Mammary epithelial cell (primary cell): ENCODE measurements at regions of chr9 and their contacts with region 1.

Region 1: GRCh38 chr9:119968836-119969707 is 599.8 kb upstream of the BRINP1 start:
- DNase-seq: peak; percentile 45
- H3K4me3 ChIP-seq: no peak overlapping the region
- H3K27ac ChIP-seq: no peak overlapping the region
- H3K4me1 ChIP-seq: peaks cover 4% of the 10 kb centered on the region
- H3K27me3 ChIP-seq: peaks cover 2% of the 10 kb centered on the region
- CTCF ChIP-seq: peak; percentile 96 to 97

Region 2: DNA sequence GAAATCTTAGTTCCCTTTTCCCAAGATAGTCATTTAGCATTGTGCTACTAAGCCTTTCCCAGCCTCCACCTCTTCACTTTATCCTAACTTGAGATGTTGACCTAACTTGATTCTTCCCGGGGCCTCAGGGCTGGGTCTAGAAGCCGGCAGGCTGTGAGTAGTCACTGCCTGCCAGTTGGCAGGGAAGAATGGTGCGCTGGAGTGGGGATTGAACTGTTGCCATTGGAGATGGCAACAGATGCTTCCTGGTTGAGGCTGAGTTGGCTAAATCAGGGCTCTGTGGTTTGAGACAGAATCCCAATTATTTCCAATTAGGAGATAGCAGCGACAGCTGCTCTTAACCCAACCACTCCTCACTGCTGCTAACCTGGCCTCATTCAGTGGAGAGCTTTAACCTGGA is 943.0 kb before region 1 on chr9:
- CTCF ChIA-PET with region 1: no interaction called
- dilution Hi-C with region 1: no loop called
- in situ Hi-C with region 1: no loop called
- intact Hi-C with region 1: no loop called
- DNase-seq: peak; percentile 9
- H3K4me3 ChIP-seq: no peak overlapping the region
- H3K27ac ChIP-seq: no peak overlapping the region
- H3K4me1 ChIP-seq: no peaks in the 10 kb centered on the region
- H3K27me3 ChIP-seq: no peaks in the 10 kb centered on the region
- CTCF ChIP-seq: no peak

Region 3: GRCh38 chr9:119375892-119376291 is 593.2 kb before region 1 on chr9:
- CTCF ChIA-PET with region 1: no interaction called
- dilution Hi-C with region 1: no loop called
- in situ Hi-C with region 1: no loop called
- intact Hi-C with region 1: loop called (anchors 5 kb)
- DNase-seq: peak; percentile 33
- H3K4me3 ChIP-seq: no peak overlapping the region
- H3K27ac ChIP-seq: no peak overlapping the region
- H3K4me1 ChIP-seq: no peaks in the 10 kb centered on the region
- H3K27me3 ChIP-seq: peaks cover 2% of the 10 kb centered on the region
- CTCF ChIP-seq: peak; percentile 59 to 71

Region 4: DNA sequence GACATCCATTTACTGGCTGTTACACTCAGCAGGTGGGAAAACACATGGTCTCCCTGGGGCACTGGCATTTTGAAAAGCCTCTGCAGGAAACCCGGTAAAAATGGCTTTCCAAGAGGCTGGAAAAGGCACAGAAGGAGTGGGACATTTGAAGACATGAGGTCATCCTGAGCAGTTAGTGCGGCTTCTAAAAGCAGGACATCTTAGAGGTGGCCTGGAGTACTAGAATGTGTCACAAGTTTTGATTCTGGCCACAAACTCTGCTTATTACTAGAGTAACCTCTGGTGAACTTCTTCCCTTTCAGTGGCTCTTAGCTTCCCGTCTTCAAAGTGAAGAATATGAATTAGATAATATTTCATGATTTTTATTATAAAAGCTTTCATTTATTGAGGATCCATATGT is 176.8 kb before region 1 on chr9:
- CTCF ChIA-PET with region 1: no interaction called
- dilution Hi-C with region 1: no loop called
- in situ Hi-C with region 1: no loop called
- intact Hi-C with region 1: loop called (anchors 10 kb)
- DNase-seq: no peak
- H3K4me3 ChIP-seq: no peak overlapping the region
- H3K27ac ChIP-seq: no peak overlapping the region
- H3K4me1 ChIP-seq: peaks cover 19% of the 10 kb centered on the region
- H3K27me3 ChIP-seq: no peaks in the 10 kb centered on the region
- CTCF ChIP-seq: no peak

Region 5: DNA sequence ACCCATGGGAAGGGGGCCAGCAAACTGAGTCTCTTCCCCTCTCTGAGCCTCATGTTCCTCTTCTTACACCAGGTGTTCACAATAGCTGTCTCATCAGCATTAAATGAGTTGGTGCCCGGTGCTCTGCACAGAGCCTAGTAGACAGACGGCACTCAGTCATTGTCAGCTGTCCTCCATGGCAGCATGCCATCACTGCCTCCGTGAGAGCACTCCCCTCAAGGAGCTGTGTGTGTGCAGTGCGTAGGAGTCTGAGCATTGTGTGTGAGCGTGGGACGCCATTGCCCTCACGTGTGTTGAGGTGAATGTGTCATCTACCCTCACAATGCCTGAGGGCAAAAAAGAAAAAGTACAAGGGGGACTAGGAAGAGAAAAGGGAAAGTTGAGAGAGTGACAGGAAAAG is 74.4 kb after region 1 on chr9:
- CTCF ChIA-PET with region 1: no interaction called
- dilution Hi-C with region 1: no loop called
- in situ Hi-C with region 1: no loop called
- intact Hi-C with region 1: no loop called
- DNase-seq: peak; percentile 11
- H3K4me3 ChIP-seq: no peak overlapping the region
- H3K27ac ChIP-seq: no peak overlapping the region
- H3K4me1 ChIP-seq: no peaks in the 10 kb centered on the region
- H3K27me3 ChIP-seq: no peaks in the 10 kb centered on the region
- CTCF ChIP-seq: no peak

Region 6: GRCh38 chr9:120477521-120478001 is 508.5 kb after region 1 on chr9:
- CTCF ChIA-PET with region 1: no interaction called
- dilution Hi-C with region 1: no loop called
- in situ Hi-C with region 1: no loop called
- intact Hi-C with region 1: loop called (anchors 2 kb)
- DNase-seq: peak; percentile 75
- H3K4me3 ChIP-seq: no peak overlapping the region
- H3K27ac ChIP-seq: no peak overlapping the region
- H3K4me1 ChIP-seq: peaks cover 13% of the 10 kb centered on the region
- H3K27me3 ChIP-seq: no peaks in the 10 kb centered on the region
- CTCF ChIP-seq: peak; percentile 93 to 96